MCF 10A (cell line): ENCODE measurements at regions of chr12 and their contacts with region 1.

Region 1: DNA sequence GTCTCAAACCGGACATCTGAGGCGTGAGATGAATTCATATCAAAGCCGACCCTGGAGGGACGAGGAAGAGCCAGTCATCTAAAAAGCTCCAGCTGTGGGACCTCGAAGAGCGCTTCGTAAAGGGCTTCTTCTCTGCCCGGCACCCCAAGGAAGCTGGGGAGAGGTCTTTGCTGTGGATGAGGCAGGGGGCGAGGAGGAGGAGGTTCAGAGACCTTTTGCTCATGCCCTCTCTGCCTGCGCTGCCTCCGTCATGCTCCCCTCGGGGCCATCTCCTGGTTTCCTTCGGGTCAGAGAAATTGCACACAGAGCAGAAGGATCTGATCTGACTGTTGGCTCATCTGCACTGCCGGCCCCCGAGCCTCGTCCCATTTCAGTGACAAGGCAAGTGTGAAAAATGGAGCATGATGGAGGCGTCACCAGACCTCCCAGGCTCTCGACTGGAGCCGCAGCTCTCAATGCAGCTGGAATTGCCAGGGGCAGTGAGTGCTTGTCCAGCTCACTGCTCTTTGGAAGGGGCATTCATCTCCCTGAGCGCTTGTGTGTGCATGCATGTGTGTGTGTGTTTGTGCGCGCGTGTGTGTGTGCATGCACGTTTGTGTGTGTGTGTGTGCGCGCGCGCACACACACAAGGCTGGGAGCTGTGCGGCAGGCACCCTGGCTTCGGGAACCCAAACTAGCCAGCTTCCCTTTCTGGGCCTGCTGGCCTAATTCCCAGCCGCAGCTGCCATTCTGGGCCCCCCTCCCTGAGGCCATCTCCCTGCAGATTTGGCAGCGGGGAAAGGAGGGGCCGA is 9.2 kb downstream of the CABP1 start:
- DNase-seq: no peak
- H3K4me3 Mint-ChIP-seq: peak overlapping the region; percentile 15
- H3K27ac Mint-ChIP-seq: no peak overlapping the region
- H3K4me1 Mint-ChIP-seq: peaks cover 14% of the 10 kb centered on the region
- H3K27me3 Mint-ChIP-seq: peaks cover 49% of the 10 kb centered on the region
- CTCF ChIP-seq: no peak

Region 2: GRCh38 chr12:120546050-120546386 is 103.6 kb before region 1 on chr12:
- CTCF ChIA-PET with region 1: no interaction called
- POLR2A ChIA-PET with region 1: no interaction called
- intact Hi-C with region 1: no loop called
- DNase-seq: no peak
- H3K4me3 Mint-ChIP-seq: no peak overlapping the region
- H3K27ac Mint-ChIP-seq: no peak overlapping the region
- H3K4me1 Mint-ChIP-seq: no peaks in the 10 kb centered on the region
- H3K27me3 Mint-ChIP-seq: no peaks in the 10 kb centered on the region
- CTCF ChIP-seq: no peak

Region 3: GRCh38 chr12:120580787-120581723 is 68.6 kb before region 1 on chr12 and contains the start of gene POP5:
- CTCF ChIA-PET with region 1: interaction called, 127 read pairs
- POLR2A ChIA-PET with region 1: interaction called, 18 read pairs
- intact Hi-C with region 1: loop called (anchors 1 kb)
- DNase-seq: peak; percentile 98
- H3K4me3 Mint-ChIP-seq: peak within 1 kb of the TSS; percentile 99
- H3K27ac Mint-ChIP-seq: peak within 1 kb of the TSS; percentile 91
- H3K4me1 Mint-ChIP-seq: peaks cover 16% of the 10 kb centered on the region
- H3K27me3 Mint-ChIP-seq: no peaks in the 10 kb centered on the region
- CTCF ChIP-seq: no peak
- total RNA-seq, gene POP5: 24.3 and 29.9 TPM in 2 replicates

Region 4: GRCh38 chr12:120598674-120599463 is 50.8 kb before region 1 on chr12:
- CTCF ChIA-PET with region 1: interaction called, 13 read pairs
- POLR2A ChIA-PET with region 1: no interaction called
- intact Hi-C with region 1: no loop called
- DNase-seq: peak; percentile 61
- H3K4me3 Mint-ChIP-seq: no peak overlapping the region
- H3K27ac Mint-ChIP-seq: no peak overlapping the region
- H3K4me1 Mint-ChIP-seq: no peaks in the 10 kb centered on the region
- H3K27me3 Mint-ChIP-seq: peaks cover 11% of the 10 kb centered on the region
- CTCF ChIP-seq: no peak

Region 5: GRCh38 chr12:120669055-120669840 is 19.6 kb after region 1 on chr12:
- CTCF ChIA-PET with region 1: interaction called, 64 read pairs
- POLR2A ChIA-PET with region 1: no interaction called
- intact Hi-C with region 1: no loop called
- DNase-seq: peak; percentile 48
- H3K4me3 Mint-ChIP-seq: no peak overlapping the region
- H3K27ac Mint-ChIP-seq: no peak overlapping the region
- H3K4me1 Mint-ChIP-seq: no peaks in the 10 kb centered on the region
- H3K27me3 Mint-ChIP-seq: no peaks in the 10 kb centered on the region
- CTCF ChIP-seq: no peak

Region 6: GRCh38 chr12:120710031-120710804 is 60.6 kb after region 1 on chr12 and contains the start of gene UNC119B:
- CTCF ChIA-PET with region 1: interaction called, 28 read pairs
- POLR2A ChIA-PET with region 1: interaction called, 4 read pairs
- intact Hi-C with region 1: loop called (anchors 1 kb)
- DNase-seq: peak; percentile 49
- H3K4me3 Mint-ChIP-seq: peak within 1 kb of the TSS; percentile 89
- H3K27ac Mint-ChIP-seq: peak within 1 kb of the TSS; percentile 55
- H3K4me1 Mint-ChIP-seq: peaks cover 16% of the 10 kb centered on the region
- H3K27me3 Mint-ChIP-seq: no peaks in the 10 kb centered on the region
- CTCF ChIP-seq: no peak
- total RNA-seq, gene UNC119B: 31.0 and 34.7 TPM in 2 replicates

Region 7: GRCh38 chr12:121110211-121110940 is 460.7 kb after region 1 on chr12:
- CTCF ChIA-PET with region 1: interaction called, 11 read pairs
- POLR2A ChIA-PET with region 1: no interaction called
- intact Hi-C with region 1: loop called (anchors 5 kb)
- DNase-seq: peak; percentile 76
- H3K4me3 Mint-ChIP-seq: no peak overlapping the region
- H3K27ac Mint-ChIP-seq: no peak overlapping the region
- H3K4me1 Mint-ChIP-seq: no peaks in the 10 kb centered on the region
- H3K27me3 Mint-ChIP-seq: no peaks in the 10 kb centered on the region
- CTCF ChIP-seq: peak; percentile 94